ENCODE measurements at regions of chr2 and their contacts with region 1.

Region 1: GRCh38 chr2:218876562-218877219 is 4.0 kb upstream of the WNT10A start:
- DNase-seq: peak; percentile 78
- H3K4me3 Mint-ChIP-seq: no peak overlapping the region
- H3K27ac Mint-ChIP-seq: no peak overlapping the region
- H3K4me1 Mint-ChIP-seq: peaks cover 22% of the 10 kb centered on the region
- H3K27me3 Mint-ChIP-seq: peaks cover 98% of the 10 kb centered on the region

Region 2: GRCh38 chr2:218622606-218623365 is 253.9 kb before region 1 on chr2:
- CTCF ChIA-PET with region 1: no interaction called
- DNase-seq: no peak
- H3K4me3 Mint-ChIP-seq: no peak overlapping the region
- H3K27ac Mint-ChIP-seq: no peak overlapping the region
- H3K4me1 Mint-ChIP-seq: no peaks in the 10 kb centered on the region
- H3K27me3 Mint-ChIP-seq: no peaks in the 10 kb centered on the region

Region 3: DNA sequence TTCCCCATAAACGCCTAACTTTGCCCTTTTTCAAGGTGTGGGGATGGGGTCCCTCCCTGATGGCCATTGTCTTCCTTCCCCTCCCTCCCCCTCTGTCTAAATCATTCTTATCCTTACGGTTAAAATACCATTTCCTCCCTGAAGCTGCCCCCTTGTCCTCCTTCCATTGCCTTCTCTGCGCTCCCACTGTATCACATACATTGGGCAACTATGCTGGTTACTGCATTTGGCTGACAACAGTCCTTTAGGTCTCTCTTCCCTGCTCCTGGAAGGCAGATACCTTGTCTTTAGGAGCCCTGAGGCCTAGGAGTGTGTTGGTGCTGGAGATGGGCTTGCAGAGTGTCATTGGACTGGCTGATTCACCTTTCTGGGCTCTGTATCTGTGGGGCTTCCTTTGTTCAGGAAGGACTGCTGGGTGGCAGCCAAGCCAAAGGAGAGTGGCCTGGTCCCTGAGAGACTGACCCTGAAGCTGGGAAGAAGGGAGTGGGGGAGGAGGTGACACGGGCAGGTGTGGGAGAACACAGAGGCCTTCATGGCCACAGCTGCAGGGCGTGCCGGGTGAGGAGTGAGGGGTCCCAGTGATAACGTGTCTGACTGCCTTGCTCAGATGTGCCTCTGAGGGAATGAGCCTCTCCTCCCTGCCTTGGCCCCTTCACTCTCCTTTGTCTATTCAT is 14.9 kb before region 1 on chr2:
- CTCF ChIA-PET with region 1: interaction called, 20 read pairs
- DNase-seq: no peak
- H3K4me3 Mint-ChIP-seq: no peak overlapping the region
- H3K27ac Mint-ChIP-seq: no peak overlapping the region
- H3K4me1 Mint-ChIP-seq: peaks cover 12% of the 10 kb centered on the region
- H3K27me3 Mint-ChIP-seq: peaks cover 95% of the 10 kb centered on the region

Region 4: GRCh38 chr2:218892693-218893348 is 16.1 kb after region 1 on chr2:
- CTCF ChIA-PET with region 1: interaction called, 443 read pairs
- DNase-seq: peak; percentile 85
- H3K4me3 Mint-ChIP-seq: peak overlapping the region; percentile 58
- H3K27ac Mint-ChIP-seq: peak overlapping the region; percentile 63
- H3K4me1 Mint-ChIP-seq: peaks cover 38% of the 10 kb centered on the region
- H3K27me3 Mint-ChIP-seq: peaks cover 97% of the 10 kb centered on the region

Region 5: DNA sequence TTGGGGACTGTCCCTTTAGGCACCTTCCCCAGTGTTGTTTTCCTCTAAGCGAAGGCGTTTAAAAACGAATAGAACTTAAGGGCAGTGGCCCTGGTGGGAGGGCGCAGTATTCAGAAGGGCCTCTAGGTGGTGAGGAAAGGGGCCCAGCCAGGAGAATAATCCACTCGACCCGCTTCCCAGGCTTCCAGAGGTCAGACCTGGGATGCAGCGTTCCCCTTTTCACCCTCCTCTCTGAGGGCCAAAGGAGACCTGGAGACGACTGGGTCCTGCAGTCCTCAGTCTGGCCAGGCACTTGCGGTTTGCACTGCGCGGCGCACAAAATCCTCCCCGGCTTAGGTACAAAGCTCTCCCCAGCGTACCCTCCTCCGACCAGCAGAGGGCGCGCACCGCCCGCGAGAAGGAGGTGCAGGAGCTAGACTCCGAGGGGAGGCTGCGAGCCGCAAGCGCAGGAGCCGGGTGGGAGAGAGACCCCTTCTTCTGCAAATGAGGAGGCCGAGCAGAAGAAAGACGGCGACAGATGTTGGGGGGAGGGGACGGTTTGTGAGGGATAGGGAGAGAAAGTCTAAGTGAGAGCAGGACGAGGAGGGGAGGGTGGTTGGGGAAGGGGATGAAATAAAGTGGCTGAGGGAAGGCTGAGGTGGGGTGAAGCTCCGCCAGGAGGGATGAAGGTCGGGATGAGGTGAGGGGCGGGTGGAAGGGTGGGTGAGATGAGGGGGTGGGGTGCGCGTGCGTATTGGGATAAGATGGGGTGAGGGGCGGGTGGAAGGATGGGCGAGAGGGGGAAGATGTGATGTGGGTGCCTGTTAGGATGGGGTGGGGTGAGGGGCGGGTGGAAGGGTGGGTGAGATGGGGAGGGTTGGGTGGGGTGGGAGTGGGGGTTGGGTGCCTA is 103.4 kb after region 1 on chr2:
- CTCF ChIA-PET with region 1: interaction called, 14 read pairs
- DNase-seq: peak; percentile 87
- H3K4me3 Mint-ChIP-seq: peak overlapping the region; percentile 50
- H3K27ac Mint-ChIP-seq: no peak overlapping the region
- H3K4me1 Mint-ChIP-seq: peaks cover 26% of the 10 kb centered on the region
- H3K27me3 Mint-ChIP-seq: peaks cover 92% of the 10 kb centered on the region

Region 6: GRCh38 chr2:218995972-218996711 is 119.5 kb after region 1 on chr2:
- CTCF ChIA-PET with region 1: interaction called, 17 read pairs
- DNase-seq: peak; percentile 83
- H3K4me3 Mint-ChIP-seq: no peak overlapping the region
- H3K27ac Mint-ChIP-seq: no peak overlapping the region
- H3K4me1 Mint-ChIP-seq: peaks cover 10% of the 10 kb centered on the region
- H3K27me3 Mint-ChIP-seq: peaks cover 100% of the 10 kb centered on the region

Measured in activated naive CD4-positive, alpha-beta T cell treated with anti-CD3 and anti-CD28 coated beads, Interleukin-2, amount 10 ng/mL, durations not matched to agents 7 days and 5 days (primary cell).